OCI-LY7 (cell line): ENCODE measurements at regions of chrX and their contacts with region 1.

Region 1: GRCh38 chrX:3713225-3713936 is at the start of gene PRKX:
- DNase-seq: peak; percentile 74
- H3K4me3 ChIP-seq: peak within 1 kb of the TSS; percentile 84
- H3K27ac ChIP-seq: peak within 1 kb of the TSS; percentile 46
- H3K4me1 ChIP-seq: peaks cover 6% of the 10 kb centered on the region
- CTCF ChIP-seq: no peak
- total RNA-seq, gene PRKX: 9.9 and 14.6 TPM in 2 replicates

Region 2: DNA sequence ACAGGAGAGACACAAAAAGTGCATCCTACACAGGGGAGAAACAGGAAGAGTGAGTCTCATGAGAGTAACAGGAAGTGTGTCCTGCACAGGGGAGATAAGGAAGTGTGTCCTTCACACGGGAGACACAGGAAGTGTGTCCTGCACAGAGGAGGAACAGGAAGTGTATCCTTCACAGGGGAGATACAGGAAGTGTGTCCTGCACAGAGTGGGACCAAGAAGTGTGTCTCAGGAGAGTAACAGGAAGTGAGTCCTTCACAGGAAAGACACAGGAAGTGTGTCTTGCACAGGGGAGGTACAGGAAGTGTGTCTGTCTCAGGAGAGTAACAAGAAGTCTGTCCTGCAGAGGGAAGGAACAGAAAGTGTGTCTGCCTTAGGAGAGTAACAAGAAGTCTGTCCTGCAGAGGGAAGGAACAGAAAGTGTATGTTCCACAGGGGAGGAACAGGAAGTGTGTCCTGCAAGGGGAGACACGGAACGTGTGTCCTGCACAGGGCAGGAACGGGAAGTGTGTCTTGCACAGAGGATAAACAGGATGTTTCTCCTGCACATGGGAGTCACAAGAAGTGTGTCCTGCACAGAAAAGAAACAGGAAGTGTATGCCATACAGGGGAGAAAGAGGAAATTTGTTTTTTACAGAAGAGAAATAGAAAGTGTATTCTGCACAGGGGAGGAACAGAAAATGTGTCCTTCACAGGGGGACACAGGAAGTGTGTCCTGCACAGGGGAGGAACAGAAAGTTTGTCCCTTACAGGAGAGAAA is 570.2 kb before region 1 on chrX:
- CTCF ChIA-PET with region 1: no interaction called
- POLR2A ChIA-PET with region 1: no interaction called
- intact Hi-C with region 1: loop called (anchors 5 kb)
- DNase-seq: peak; percentile 59
- H3K4me3 ChIP-seq: peak overlapping the region; percentile 41
- H3K27ac ChIP-seq: peak overlapping the region; percentile 74
- H3K4me1 ChIP-seq: peaks cover 19% of the 10 kb centered on the region
- CTCF ChIP-seq: no peak

Region 3: DNA sequence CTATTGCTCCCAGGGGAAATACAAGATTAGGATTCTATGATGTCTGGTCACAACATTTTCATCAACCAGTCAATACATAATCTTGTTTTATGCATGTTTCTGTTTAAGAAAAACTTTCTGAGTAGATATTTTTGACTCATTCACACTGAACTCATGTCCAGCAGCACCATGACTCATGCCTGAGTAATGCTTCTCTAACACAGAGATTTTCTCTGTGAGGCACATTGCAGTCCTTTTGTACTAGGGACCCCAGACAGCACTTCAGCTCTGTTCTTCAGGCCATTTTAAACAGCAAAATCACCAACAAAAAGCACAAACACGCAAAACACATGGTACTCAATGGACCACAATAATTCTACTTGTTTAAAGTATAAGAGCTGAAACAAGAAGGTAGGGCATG is 450.5 kb before region 1 on chrX:
- CTCF ChIA-PET with region 1: no interaction called
- POLR2A ChIA-PET with region 1: no interaction called
- intact Hi-C with region 1: no loop called
- DNase-seq: no peak
- H3K4me3 ChIP-seq: no peak overlapping the region
- H3K27ac ChIP-seq: no peak overlapping the region
- H3K4me1 ChIP-seq: no peaks in the 10 kb centered on the region
- CTCF ChIP-seq: no peak

Region 4: DNA sequence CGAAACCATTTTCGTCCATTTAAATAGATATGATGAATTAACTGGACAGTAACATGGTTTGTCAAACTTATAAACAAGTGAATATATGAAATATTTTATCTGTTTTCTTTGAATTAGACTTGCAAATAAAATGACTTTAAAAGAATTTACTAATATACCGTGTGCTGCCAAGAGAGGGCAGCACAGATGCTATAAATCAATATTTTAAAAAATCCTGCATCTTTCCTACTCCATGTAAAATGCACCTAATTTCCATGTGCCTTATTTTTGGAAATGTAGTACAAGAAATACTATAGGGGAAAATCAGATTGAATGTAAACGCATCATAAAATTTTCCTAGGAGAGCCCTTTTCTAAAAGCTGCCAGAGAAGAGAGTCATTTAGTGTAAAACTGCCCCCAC is 62.1 kb before region 1 on chrX:
- CTCF ChIA-PET with region 1: no interaction called
- POLR2A ChIA-PET with region 1: no interaction called
- intact Hi-C with region 1: loop called (anchors 5 kb)
- DNase-seq: peak; percentile 24
- H3K4me3 ChIP-seq: no peak overlapping the region
- H3K27ac ChIP-seq: no peak overlapping the region
- H3K4me1 ChIP-seq: no peaks in the 10 kb centered on the region
- CTCF ChIP-seq: peak; percentile 76

Region 5: GRCh38 chrX:3699821-3700381 is 13.5 kb before region 1 on chrX:
- CTCF ChIA-PET with region 1: no interaction called
- POLR2A ChIA-PET with region 1: interaction called, 12 read pairs
- intact Hi-C with region 1: no loop called
- DNase-seq: peak; percentile 42
- H3K4me3 ChIP-seq: peak overlapping the region; percentile 64
- H3K27ac ChIP-seq: peak overlapping the region; percentile 63
- H3K4me1 ChIP-seq: peaks cover 23% of the 10 kb centered on the region
- CTCF ChIP-seq: no peak

Region 6: DNA sequence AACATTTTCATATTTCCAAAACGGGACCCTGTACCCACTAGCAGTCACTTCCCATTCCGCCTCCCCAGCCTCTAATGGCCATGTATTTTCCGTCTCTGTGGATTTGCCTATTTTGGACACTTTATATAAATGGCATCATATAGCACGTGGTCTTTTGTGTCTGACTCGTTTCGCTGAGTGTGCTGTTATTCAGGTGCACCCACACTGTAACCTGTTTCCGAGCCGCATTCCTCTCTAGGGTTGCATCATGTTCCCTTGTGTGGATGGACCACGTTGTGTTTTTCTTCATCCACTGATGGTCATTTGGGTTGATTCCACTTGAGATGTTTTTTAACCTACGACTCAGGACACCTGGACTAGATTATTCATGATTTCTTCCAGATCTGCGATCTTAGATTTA is 85.2 kb after region 1 on chrX:
- CTCF ChIA-PET with region 1: no interaction called
- POLR2A ChIA-PET with region 1: no interaction called
- intact Hi-C with region 1: no loop called
- DNase-seq: no peak
- H3K4me3 ChIP-seq: no peak overlapping the region
- H3K27ac ChIP-seq: no peak overlapping the region
- H3K4me1 ChIP-seq: peaks cover 8% of the 10 kb centered on the region
- CTCF ChIP-seq: no peak

Region 7: DNA sequence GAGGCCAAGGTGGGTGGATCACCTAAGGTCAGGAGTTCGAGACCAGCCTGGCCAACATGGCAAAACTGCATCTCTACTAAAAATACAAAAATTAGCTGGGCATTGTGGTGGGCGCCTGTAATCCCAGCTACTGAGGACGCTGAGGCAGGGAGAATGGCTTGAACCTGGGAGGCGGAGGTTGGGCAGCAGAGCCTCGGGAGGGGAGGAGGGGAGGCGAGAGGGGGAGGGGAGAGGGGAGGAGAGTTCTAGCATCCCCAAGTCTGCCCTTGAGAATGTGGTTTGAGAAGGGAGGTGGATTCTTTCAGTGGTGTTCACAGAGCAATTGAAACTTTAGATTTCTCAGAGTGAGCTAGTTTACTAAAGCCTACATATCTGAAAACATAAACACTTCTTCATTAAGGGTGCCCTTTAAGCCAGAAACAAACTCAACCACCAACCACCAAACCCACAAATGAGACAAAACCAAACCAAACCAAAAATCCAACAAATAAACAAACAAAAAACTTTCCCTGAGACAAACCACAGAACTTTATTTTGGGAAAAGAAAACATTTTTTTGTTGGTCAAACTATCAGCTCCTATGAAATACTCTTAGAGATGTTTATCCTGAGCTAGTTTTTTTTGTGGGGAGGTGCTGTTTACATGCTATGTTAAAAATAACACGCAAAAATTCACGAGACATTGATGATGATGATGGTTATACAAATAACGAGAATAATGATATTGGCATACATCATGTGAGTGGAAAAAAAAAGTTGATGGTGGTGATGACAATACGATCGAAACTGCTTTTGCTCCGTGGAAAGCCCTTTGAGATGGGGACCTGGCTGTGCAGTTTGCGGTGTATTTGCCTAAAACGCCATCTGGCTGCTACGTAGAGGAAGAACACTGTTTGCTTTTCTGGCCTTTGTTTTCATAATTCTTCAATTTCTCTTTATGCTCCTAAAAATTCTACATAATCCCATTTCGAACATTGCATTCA is 98.2 kb after region 1 on chrX:
- CTCF ChIA-PET with region 1: no interaction called
- POLR2A ChIA-PET with region 1: no interaction called
- intact Hi-C with region 1: loop called (anchors 2 kb)
- DNase-seq: peak; percentile 58
- H3K4me3 ChIP-seq: no peak overlapping the region
- H3K27ac ChIP-seq: no peak overlapping the region
- H3K4me1 ChIP-seq: peaks cover 18% of the 10 kb centered on the region
- CTCF ChIP-seq: peak; percentile 73